ENCODE measurements at regions of chr13 and their contacts with region 1.

Region 1: DNA sequence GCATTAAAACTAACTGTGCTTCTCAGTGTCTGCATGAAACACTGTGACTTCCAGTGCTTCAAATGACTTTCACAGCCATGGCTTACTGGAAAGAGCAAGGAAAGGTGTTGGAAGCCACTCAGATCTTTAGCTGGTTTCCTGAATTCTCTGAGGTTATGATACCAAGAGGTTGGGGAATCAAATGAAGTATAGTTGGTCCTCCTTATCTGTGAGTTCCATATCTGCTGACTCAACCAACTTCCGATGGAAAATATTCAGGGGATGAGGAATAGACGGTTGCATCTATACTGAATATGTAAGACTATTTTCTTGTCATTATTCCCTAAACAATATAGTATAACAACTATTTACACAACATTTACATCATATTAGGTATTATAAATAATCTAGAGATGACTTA is 32.4 kb downstream of the EPSTI1 start:
- DNase-seq: no peak
- ATAC-seq: no peak
- H3K4me3 ChIP-seq: no peak overlapping the region
- H3K27ac ChIP-seq: no peak overlapping the region
- H3K4me1 ChIP-seq: no peaks in the 10 kb centered on the region
- CTCF ChIP-seq: no peak
- EP300 ChIP-seq: no peak
- POLR2A ChIP-seq: no peak
- RAD21 ChIP-seq: no peak

Region 2: DNA sequence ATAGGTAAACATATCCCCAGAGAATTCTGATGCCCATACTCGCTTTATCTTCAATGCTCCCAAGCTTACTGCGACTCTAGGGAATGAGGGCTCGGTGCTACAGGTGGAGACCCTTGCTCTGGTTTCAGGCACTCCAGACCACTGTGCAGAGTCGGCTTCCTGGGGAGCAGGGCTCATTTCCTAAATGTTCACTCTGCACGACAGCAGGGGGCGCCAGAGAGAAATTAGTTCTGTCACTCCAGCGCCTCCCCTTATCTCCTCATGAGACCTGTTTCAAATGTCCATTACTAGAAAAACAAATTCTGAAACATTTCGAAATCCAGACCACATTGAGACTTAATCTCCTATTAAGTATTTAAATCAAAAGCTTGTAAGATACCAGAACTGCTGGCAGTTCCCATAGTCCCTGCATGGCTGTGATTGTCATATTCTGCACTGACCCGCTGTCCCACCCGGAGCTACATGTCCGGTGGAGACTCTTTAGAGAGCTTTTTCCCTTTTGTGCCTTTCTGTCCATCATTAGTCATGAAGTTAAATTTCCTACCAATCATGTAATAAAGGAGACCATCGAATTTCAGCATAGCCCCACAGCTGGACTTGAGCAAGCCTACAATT is 10.1 kb after region 1 on chr13:
- CTCF ChIA-PET with region 1: interaction called, 10 read pairs
- POLR2A ChIA-PET with region 1: no interaction called
- DNase-seq: peak; percentile 41 to 55
- ATAC-seq: peak; percentile 80 to 92; a peak in 5 of 6 replicates
- H3K4me3 ChIP-seq: no peak overlapping the region
- H3K27ac ChIP-seq: peak overlapping the region in 1 of 2 experiments; percentile 28; a peak in 1 of 6 replicates
- H3K4me1 ChIP-seq: peaks cover 14% of the 10 kb centered on the region
- CTCF ChIP-seq: peak; percentile 58
- EP300 ChIP-seq: no peak
- POLR2A ChIP-seq: no peak
- RAD21 ChIP-seq: peak; percentile 43 to 46; a peak in 4 of 5 replicates

Measured in A549 (cell line).